ENCODE measurements at regions of chr3 and their contacts with region 1.

Region 1: DNA sequence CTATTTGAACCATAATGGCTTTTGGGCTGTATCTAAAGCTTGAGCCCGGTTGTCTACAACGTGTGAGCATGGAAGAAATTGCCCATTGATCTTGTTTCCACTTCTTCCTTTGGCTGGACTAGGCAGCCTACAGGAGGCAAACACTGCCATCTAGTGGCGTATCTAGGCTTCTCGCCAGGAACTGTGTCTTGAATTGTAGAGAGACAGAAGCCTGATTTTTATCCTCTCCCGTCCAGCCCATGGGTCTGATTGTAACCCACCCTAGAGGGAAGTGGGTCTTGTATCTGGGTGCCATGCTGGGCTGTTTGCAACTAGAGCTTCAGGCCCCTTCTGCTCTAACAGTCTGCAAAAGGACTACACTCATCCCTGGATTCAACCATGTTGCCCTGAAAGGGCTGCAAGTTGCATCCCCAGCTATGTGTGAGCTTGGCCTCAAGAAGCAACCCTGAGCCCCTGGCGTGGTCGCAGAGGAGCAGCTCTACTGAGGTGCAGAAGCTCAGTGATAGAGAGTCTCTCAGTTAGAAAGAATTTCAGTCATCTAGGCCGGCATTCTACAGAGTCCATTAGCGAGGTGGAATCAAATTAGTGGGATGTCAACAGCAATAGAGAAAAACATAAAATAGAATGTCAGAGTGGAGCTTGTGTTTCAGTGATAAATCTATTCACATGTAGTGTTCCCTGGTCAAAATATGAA is 170.2 kb upstream of the UMPS start:
- DNase-seq: peak in 4 of 5 donors; percentile 69 to 87 (median 76)
- H3K4me3 ChIP-seq: no peak overlapping the region
- H3K27ac ChIP-seq: peak overlapping the region; percentile 45 to 51
- H3K4me1 ChIP-seq: peaks cover 0 to 14% (median 12%) of the 10 kb centered on the region in 3 donors
- H3K27me3 ChIP-seq: no peaks in the 10 kb centered on the region
- CTCF ChIP-seq: peak; percentile 93

Region 2: DNA sequence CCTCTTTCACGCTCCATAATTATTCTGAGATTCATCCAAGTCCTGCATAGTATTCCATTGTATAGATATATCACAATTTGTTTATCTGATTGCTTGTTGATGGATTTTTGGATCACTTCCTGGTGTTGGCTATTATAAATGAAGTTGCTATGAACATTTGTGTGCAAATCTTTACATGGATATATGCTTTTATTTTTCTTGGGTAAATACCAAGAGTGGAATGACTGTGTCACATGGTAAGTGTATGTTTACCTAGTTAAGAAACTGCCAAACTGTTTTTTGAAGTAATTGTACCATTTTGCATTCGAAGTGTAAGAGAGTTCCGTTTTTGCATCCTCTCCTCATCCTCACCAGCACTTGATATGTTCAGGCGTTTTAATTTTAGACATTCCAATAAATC is 533.5 kb before region 1 on chr3:
- intact Hi-C with region 1: loop called (anchors 10 kb)
- DNase-seq: peak in 2 of 5 donors; percentile 6 to 19
- H3K4me3 ChIP-seq: no peak overlapping the region
- H3K27ac ChIP-seq: no peak overlapping the region
- H3K4me1 ChIP-seq: no peaks in the 10 kb centered on the region
- H3K27me3 ChIP-seq: no peaks in the 10 kb centered on the region
- CTCF ChIP-seq: no peak

Region 3: DNA sequence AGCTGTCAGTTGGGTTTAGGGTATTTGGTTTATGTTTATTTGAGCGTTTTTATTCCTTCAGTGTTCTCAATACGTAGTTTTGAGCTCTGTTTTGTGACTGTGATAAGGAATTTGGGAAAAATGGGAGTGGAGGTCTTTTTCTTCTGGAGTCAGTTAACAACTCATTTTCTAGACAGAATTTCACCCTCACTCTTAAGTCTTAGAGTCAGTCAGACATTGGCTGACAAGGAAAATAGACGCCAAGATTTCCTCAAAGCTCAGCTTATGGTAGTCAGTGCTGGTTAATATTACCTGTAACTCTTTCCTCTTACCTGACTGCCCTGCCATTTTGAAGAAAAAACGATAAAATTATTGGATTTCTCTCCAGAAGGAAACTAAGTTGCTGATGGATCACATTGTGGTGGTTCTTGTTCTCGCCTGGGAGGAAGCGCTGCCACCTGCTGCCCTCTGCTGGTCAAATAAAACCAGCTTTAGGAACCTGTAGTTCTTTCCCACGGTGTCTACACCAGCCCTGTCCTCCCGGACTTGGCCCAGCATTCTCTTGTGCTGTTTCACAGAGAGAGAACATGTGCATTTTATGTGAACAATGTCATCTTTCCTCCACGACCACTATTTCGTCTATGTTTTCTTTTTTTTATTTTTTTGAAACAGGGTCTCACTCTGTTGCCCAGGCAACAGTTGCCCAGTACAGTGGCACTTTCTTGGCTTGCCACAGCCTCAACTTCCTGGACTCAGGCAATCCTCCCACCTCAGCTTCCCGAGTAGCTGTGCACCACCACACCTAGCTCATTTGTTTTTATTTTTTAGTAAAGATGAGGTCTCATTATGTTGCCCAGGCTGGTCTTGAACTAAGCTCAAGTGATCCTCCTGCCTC is 128.8 kb after region 1 on chr3:
- intact Hi-C with region 1: loop called (anchors 10 kb)
- DNase-seq: peak; percentile 81 to 83 (median 82)
- H3K4me3 ChIP-seq: no peak overlapping the region
- H3K27ac ChIP-seq: no peak overlapping the region
- H3K4me1 ChIP-seq: no peaks in the 10 kb centered on the region
- H3K27me3 ChIP-seq: no peaks in the 10 kb centered on the region
- CTCF ChIP-seq: peak; percentile 78